Mammary epithelial cell (primary cell): ENCODE measurements at regions of chr20 and their contacts with region 1.

Region 1: GRCh38 chr20:42161228-42161829 is 543.2 kb upstream of the CHD6 start:
- DNase-seq: no peak
- H3K4me3 ChIP-seq: no peak overlapping the region
- H3K27ac ChIP-seq: no peak overlapping the region
- H3K4me1 ChIP-seq: no peaks in the 10 kb centered on the region
- H3K27me3 ChIP-seq: no peaks in the 10 kb centered on the region
- CTCF ChIP-seq: no peak

Region 2: GRCh38 chr20:41877911-41878310 is 283.4 kb before region 1 on chr20:
- CTCF ChIA-PET with region 1: no interaction called
- dilution Hi-C with region 1: no loop called
- in situ Hi-C with region 1: no loop called
- intact Hi-C with region 1: no loop called
- DNase-seq: no peak
- H3K4me3 ChIP-seq: no peak overlapping the region
- H3K27ac ChIP-seq: no peak overlapping the region
- H3K4me1 ChIP-seq: no peaks in the 10 kb centered on the region
- H3K27me3 ChIP-seq: no peaks in the 10 kb centered on the region
- CTCF ChIP-seq: no peak

Region 3: DNA sequence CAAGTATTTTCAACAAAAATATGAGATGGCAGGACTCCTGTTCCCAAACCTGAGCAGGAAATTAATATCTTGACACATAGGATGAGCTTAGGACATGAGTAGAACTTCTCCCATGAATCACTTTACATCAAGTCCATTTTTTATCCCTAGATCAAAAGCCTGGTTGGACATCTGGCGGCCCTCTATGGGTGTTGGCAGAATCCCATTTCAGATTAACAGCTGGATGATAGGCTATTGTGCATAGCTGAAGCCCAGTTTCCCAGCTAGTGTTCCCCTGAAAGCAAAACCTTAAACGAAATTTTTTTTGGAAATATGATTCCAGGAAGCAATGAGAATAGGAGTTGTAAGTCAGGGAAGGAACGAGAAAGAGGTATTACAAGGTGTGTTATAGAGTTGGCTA is 93.7 kb before region 1 on chr20:
- CTCF ChIA-PET with region 1: no interaction called
- dilution Hi-C with region 1: no loop called
- in situ Hi-C with region 1: no loop called
- intact Hi-C with region 1: no loop called
- DNase-seq: no peak
- H3K4me3 ChIP-seq: no peak overlapping the region
- H3K27ac ChIP-seq: no peak overlapping the region
- H3K4me1 ChIP-seq: no peaks in the 10 kb centered on the region
- H3K27me3 ChIP-seq: no peaks in the 10 kb centered on the region
- CTCF ChIP-seq: no peak

Region 4: DNA sequence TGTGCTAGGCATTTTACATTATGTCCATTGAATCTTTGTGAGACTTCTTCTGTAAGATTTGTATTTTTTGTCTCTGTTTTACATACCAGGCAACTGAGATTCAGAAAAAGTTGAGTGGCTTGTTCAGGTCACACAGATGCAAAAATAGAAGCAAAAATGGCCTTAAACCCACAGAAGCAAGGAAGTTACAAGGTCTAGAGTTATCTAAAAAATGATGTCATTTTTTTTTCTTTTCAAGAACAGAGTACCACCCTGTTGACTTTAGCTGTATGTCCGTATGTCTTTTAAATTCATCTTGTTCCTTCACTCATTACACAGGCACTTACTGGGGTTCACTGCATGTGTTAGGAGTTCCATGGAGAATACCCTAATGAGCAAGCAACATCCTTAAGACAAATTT is 68.3 kb after region 1 on chr20:
- CTCF ChIA-PET with region 1: no interaction called
- dilution Hi-C with region 1: loop called (anchors 5 kb)
- in situ Hi-C with region 1: no loop called
- intact Hi-C with region 1: no loop called
- DNase-seq: no peak
- H3K4me3 ChIP-seq: no peak overlapping the region
- H3K27ac ChIP-seq: no peak overlapping the region
- H3K4me1 ChIP-seq: no peaks in the 10 kb centered on the region
- H3K27me3 ChIP-seq: no peaks in the 10 kb centered on the region
- CTCF ChIP-seq: no peak